Activated naive CD4-positive, alpha-beta T cell treated with anti-CD3 and anti-CD28 coated beads for 36 hours (primary cell): ENCODE measurements at regions of chr12 and their contacts with region 1.

Region 1: GRCh38 chr12:6723607-6724396 is at the start of gene COPS7A:
- DNase-seq: peak; percentile 98
- H3K4me3 Mint-ChIP-seq: peak within 1 kb of the TSS; percentile 91
- H3K27ac Mint-ChIP-seq: peak within 1 kb of the TSS; percentile 89
- H3K4me1 Mint-ChIP-seq: peaks cover 25% of the 10 kb centered on the region
- H3K27me3 Mint-ChIP-seq: no peaks in the 10 kb centered on the region
- total RNA-seq, gene COPS7A: 43.0 to 47.8 TPM

Region 2: GRCh38 chr12:5817246-5817645 is 906.6 kb before region 1 on chr12:
- CTCF ChIA-PET with region 1: no interaction called
- intact Hi-C with region 1: no loop called
- DNase-seq: no peak
- H3K4me3 Mint-ChIP-seq: no peak overlapping the region
- H3K27ac Mint-ChIP-seq: no peak overlapping the region
- H3K4me1 Mint-ChIP-seq: no peaks in the 10 kb centered on the region
- H3K27me3 Mint-ChIP-seq: peaks cover 11% of the 10 kb centered on the region

Region 3: DNA sequence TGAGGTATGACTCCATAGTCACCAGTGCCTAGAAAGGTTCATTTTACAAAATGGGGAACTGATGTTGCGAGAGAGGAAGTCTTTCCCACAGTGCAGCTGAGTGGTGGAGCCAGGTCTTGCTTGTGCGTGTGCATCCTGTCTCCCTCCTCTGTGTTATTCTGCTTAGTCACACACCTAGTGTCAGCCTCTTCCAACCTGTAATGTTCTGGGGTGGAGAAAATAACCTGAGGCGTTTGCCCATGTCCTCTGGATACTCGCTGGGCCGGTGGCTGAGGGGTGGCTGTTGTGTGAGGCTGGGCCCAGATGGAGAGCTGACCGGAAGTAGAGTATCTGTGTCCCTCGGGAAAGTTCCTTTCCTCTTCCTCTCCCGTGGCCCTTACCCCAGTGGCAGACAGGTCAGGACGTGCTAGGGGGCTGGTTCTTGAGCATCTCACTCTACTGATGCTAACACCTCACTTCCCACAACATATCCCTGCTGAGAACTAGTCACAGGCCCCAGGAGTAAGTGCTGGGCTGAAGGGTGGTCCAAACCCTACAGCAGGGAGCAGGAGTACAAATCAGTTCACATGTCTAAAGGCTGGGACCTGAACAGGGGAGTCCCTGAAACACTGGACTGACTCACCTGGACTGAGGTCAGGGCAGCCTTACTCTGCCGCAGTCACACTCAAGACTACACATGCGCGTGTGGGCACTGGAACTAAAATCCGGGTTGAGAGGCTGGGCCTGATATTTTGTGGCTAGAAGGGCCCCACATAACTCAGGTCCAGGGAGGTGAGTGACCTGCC is 22.1 kb after region 1 on chr12:
- CTCF ChIA-PET with region 1: interaction called, 4 read pairs
- intact Hi-C with region 1: loop called (anchors 1 kb)
- DNase-seq: peak; percentile 72
- H3K4me3 Mint-ChIP-seq: no peak overlapping the region
- H3K27ac Mint-ChIP-seq: peak overlapping the region; percentile 90
- H3K4me1 Mint-ChIP-seq: peaks cover 38% of the 10 kb centered on the region
- H3K27me3 Mint-ChIP-seq: no peaks in the 10 kb centered on the region

Region 4: DNA sequence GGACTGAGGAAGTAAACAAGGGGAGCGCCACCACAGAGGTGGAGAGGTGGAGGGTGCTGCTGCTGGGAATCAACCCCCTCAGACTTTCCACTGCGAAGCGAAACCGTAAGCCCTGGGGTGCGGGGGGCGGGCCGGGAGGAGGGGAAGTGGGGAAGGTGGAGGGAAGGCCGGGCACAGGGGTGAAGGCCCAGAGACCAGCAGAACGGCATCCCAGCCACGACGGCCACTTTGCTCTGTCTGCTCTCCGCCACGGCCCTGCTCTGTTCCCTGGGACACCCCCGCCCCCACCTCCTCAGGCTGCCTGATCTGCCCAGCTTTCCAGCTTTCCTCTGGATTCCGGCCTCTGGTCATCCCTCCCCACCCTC is 48.5 kb after region 1 on chr12 and contains the start of gene LAG3:
- CTCF ChIA-PET with region 1: no interaction called
- intact Hi-C with region 1: loop called (anchors 2 kb)
- DNase-seq: peak; percentile 80
- H3K4me3 Mint-ChIP-seq: peak within 1 kb of the TSS; percentile 83
- H3K27ac Mint-ChIP-seq: peak within 1 kb of the TSS; percentile 88
- H3K4me1 Mint-ChIP-seq: peaks cover 69% of the 10 kb centered on the region
- H3K27me3 Mint-ChIP-seq: peaks cover 14% of the 10 kb centered on the region
- total RNA-seq, gene LAG3: 22.8 to 25.1 TPM